Head of caudate nucleus (tissue), 42 donors: ENCODE measurements at regions of chr6 and their contacts with region 1.

Region 1: GRCh38 chr6:31665501-31666336 is at the start of gene CSNK2B:
- DNase-seq: peak; percentile 99 to 100 (median 100)

Region 2: DNA sequence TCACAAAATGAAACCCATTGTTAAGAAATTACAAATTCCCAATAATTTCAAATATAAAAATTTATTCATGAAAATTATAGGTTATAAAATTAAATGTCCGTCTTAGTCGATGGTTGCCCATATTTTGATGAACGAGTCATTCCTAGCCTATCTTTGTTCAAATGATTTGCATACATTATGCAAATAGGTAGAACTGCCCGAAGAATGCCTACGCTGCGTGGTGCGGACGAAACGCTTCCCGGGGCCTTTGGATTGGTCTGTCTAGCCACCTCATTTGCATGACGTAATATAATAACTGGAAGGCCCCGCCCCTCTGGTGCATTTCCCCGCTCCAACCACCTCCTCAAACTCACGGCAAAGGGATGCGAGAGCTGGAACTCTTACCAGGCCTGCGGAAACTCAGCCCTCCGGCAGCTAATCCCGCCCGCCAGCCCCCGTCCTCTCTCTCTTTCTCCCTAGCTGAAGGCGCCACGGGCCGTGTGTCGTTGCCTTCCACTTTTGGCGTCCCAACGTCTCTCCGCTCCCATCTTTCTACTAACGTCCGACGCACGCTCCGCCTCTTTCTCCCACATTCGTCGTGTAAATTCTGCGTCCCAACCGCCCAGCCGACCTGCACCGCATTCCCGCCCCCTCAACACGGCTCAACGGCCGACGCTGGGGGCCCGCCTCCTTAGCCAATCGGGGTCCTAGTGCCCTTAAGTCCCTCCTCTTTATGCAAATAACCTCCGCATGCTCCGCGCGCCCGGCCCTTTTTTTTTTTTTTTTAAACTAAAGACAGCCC is 45.7 kb before region 1 on chr6:
- intact Hi-C with region 1: loop called (anchors 5 kb)
- DNase-seq: peak; percentile 90 to 99 (median 97)

Region 3: DNA sequence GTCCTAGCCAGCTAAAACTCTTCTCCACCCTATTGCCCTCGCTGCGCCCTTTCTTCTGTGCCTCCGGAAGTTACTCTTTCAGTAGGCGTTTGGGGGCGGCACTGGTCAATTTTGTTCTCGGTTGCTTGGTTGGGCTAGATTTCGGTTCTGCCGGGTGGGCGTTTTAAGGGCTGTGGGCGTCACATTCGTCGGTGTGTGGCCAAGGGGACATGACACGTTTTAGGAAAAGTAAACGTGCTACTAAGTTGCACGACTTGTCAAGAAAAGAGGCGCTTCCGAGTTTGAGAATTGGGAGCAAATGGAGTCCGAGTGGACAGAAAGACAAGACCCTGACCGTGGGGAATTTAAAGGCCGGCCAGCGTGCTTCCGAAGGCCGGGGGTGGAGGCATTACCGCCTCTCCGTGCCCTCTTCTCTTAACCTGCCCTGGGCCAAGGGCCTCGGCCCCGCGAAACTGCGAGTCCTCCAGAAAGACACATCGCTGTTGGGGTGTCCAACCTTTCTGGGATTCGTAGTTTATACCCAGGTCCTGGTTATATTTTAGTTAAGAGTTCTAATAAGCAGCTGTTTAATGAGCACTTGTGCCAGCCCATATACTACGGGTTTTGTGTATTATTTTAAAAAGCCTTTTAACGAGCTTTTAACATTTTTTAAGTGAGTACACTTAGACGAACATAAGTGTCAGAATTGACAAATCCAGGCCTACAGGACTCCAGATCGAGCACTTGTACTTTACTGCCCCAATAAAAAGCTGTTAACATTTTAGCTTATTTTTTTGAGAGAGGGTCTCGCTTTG is 12.6 kb before region 1 on chr6:
- intact Hi-C with region 1: loop called (anchors 1 kb)
- DNase-seq: peak in 41 of 42 donors; percentile 71 to 94 (median 87)

Region 4: GRCh38 chr6:31806465-31807272 is 140.9 kb after region 1 on chr6 and contains the start of gene LSM2:
- intact Hi-C with region 1: no loop called
- DNase-seq: peak; percentile 94 to 99 (median 98)